Left cardiac atrium (tissue), 4 donors: ENCODE measurements at regions of chrX and their contacts with region 1.

Region 1: GRCh38 chrX:84729809-84730208 is 227.6 kb upstream of the HDX start:
- DNase-seq: no peak
- ATAC-seq: peak; percentile 71 to 78

Region 2: DNA sequence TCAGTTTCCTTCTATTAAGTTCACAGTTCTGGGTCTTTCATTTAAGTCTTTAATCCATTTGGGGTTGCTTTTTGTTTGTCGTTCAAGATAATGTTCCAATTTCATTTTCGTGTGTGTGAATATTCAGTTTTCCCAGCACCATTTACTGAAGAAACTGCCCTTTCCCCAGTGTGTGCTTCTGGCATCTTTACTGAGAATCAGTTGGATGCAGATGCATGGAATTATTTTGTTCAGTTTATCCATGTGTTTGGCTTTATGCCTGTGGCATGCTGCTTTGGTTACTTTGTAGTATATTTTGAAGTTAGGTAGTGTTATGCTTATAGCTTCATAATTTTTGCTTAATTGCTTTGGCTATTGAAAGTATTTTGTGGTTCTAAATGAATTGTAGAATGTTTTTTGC is 63.7 kb before region 1 on chrX:
- intact Hi-C with region 1: no loop called
- DNase-seq: no peak
- ATAC-seq: no peak

Region 3: GRCh38 chrX:84796321-84796720 is 66.5 kb after region 1 on chrX:
- intact Hi-C with region 1: no loop called
- DNase-seq: no peak
- ATAC-seq: no peak

Region 4: DNA sequence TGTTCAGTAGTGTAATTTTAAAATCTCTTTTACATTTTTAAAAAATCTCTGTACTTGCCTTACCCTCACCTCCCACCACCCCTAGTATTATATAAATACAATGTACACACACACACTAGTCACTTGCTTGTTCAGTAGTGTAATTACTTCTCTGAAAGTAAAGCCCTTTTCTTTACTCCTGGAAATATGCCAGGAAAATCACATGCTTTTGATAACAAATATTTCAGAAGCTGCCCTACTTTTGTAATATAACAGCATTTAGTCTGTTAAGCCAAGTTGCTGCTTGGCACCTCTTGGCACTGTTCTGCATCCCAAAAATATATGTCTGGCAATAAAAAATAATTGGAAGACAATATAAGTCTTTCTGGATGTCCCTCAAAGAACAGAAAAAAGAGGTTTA is 101.0 kb after region 1 on chrX:
- intact Hi-C with region 1: no loop called
- DNase-seq: no peak
- ATAC-seq: no peak

Region 5: GRCh38 chrX:84907324-84907968 is 177.6 kb after region 1 on chrX:
- intact Hi-C with region 1: loop called in 1 of 2 experiments (anchors 2 kb)
- DNase-seq: no peak
- ATAC-seq: no peak

Region 6: GRCh38 chrX:84993150-84993549 is 263.3 kb after region 1 on chrX:
- intact Hi-C with region 1: loop called in 1 of 2 experiments (anchors 5 kb)
- DNase-seq: no peak
- ATAC-seq: no peak

Region 7: GRCh38 chrX:85052636-85053343 is 323.0 kb after region 1 on chrX:
- intact Hi-C with region 1: loop called in 1 of 2 experiments (anchors 5 kb)
- DNase-seq: no peak
- ATAC-seq: peak in 1 of 2 donors; percentile 46